Activated B cell treated with CpG ODN at 0.5 μM for 24 hours (primary cell): ENCODE measurements at regions of chr12 and their contacts with region 1.

Region 1: GRCh38 chr12:1093166-1093751 is 102.2 kb downstream of the ERC1 start:
- DNase-seq: no peak
- ATAC-seq: peak; percentile 80
- H3K4me3 Mint-ChIP-seq: no peak overlapping the region
- H3K27ac Mint-ChIP-seq: no peak overlapping the region
- H3K4me1 Mint-ChIP-seq: peaks cover 2% of the 10 kb centered on the region
- H3K27me3 Mint-ChIP-seq: no peaks in the 10 kb centered on the region
- CTCF ChIP-seq: no peak

Region 2: GRCh38 chr12:569803-570434 is 523.3 kb before region 1 on chr12:
- CTCF ChIA-PET with region 1: interaction called, 11 read pairs
- POLR2A ChIA-PET with region 1: no interaction called
- intact Hi-C with region 1: loop called (anchors 5 kb)
- DNase-seq: peak; percentile 84
- ATAC-seq: peak; percentile 98
- H3K4me3 Mint-ChIP-seq: peak overlapping the region; percentile 81
- H3K27ac Mint-ChIP-seq: no peak overlapping the region
- H3K4me1 Mint-ChIP-seq: peaks cover 4% of the 10 kb centered on the region
- H3K27me3 Mint-ChIP-seq: no peaks in the 10 kb centered on the region
- CTCF ChIP-seq: no peak

Region 3: GRCh38 chr12:868722-869121 is 224.5 kb before region 1 on chr12:
- CTCF ChIA-PET with region 1: no interaction called
- POLR2A ChIA-PET with region 1: no interaction called
- intact Hi-C with region 1: loop called (anchors 5 kb)
- DNase-seq: no peak
- ATAC-seq: no peak
- H3K4me3 Mint-ChIP-seq: no peak overlapping the region
- H3K27ac Mint-ChIP-seq: no peak overlapping the region
- H3K4me1 Mint-ChIP-seq: no peaks in the 10 kb centered on the region
- H3K27me3 Mint-ChIP-seq: no peaks in the 10 kb centered on the region
- CTCF ChIP-seq: no peak

Region 4: GRCh38 chr12:913919-914708 is 179.1 kb before region 1 on chr12:
- CTCF ChIA-PET with region 1: interaction called, 3 read pairs
- POLR2A ChIA-PET with region 1: no interaction called
- intact Hi-C with region 1: loop called (anchors 10 kb)
- DNase-seq: no peak
- ATAC-seq: no peak
- H3K4me3 Mint-ChIP-seq: no peak overlapping the region
- H3K27ac Mint-ChIP-seq: peak overlapping the region; percentile 12
- H3K4me1 Mint-ChIP-seq: peaks cover 25% of the 10 kb centered on the region
- H3K27me3 Mint-ChIP-seq: no peaks in the 10 kb centered on the region
- CTCF ChIP-seq: no peak

Region 5: GRCh38 chr12:1130164-1130563 is 36.9 kb after region 1 on chr12:
- CTCF ChIA-PET with region 1: no interaction called
- POLR2A ChIA-PET with region 1: no interaction called
- intact Hi-C with region 1: no loop called
- DNase-seq: no peak
- ATAC-seq: no peak
- H3K4me3 Mint-ChIP-seq: no peak overlapping the region
- H3K27ac Mint-ChIP-seq: no peak overlapping the region
- H3K4me1 Mint-ChIP-seq: no peaks in the 10 kb centered on the region
- H3K27me3 Mint-ChIP-seq: no peaks in the 10 kb centered on the region
- CTCF ChIP-seq: no peak